ENCODE measurements at regions of chr2 and their contacts with region 1.

Region 1: DNA sequence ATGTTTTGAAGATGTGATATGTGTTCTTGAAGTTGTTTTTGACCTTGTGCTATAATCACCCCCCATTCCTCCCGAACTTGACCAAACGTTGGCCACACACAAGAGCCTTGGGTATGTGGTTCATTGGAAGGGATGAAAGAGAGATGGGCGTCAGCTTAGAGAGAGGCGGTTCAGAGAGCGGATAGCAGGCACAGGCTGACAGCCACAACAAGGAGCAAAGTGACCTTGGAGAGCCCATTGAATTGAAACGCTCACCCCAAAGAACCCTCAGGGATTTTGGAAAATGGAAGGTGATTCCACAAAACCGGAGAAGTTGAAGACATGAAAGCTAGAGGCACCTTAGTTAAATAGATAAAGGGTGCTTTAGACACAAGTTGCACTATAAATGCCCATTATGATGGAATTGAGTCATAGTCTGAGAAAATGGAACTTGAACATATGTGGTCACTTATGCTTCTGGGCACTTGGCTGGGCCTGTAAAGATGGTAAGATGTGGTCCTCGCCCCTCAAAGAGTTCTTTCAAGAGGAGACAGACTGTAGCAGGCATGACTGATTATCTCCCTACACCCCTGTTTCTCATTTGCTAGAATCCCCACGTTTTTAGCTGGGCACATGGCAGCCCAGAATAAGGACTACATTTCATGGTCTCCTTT is 188.5 kb upstream of the HAAO start:
- DNase-seq: peak; percentile 3

Region 2: DNA sequence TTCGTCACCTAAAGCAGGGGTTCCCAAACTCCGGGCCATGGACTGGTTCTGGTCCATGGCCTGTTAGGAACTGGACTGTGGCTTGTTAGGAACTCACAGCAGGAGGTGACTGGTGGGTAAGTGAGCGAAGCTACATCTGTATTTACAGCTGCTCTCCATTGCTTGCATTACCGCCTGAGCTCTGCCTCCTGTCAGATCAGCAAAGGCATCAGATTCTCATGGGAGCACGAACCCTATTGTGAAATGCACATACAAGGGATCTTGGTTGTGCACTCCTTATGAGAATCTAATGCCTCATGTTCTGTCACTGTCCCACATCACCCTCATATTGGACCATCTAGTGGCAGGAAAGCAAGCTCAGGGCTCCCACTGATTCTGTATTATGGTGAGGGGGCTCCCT is 28.6 kb after region 1 on chr2:
- intact Hi-C with region 1: loop called in 1 of 2 experiments (anchors 1 kb)
- DNase-seq: peak; percentile 5